MCF 10A (cell line): ENCODE measurements at regions of chr5 and their contacts with region 1.

Region 1: GRCh38 chr5:57082441-57083067 is 91.3 kb upstream of the GPBP1 start:
- DNase-seq: peak; percentile 42
- H3K4me3 Mint-ChIP-seq: no peak overlapping the region
- H3K27ac Mint-ChIP-seq: no peak overlapping the region
- H3K4me1 Mint-ChIP-seq: no peaks in the 10 kb centered on the region
- H3K27me3 Mint-ChIP-seq: no peaks in the 10 kb centered on the region
- CTCF ChIP-seq: peak; percentile 44

Region 2: DNA sequence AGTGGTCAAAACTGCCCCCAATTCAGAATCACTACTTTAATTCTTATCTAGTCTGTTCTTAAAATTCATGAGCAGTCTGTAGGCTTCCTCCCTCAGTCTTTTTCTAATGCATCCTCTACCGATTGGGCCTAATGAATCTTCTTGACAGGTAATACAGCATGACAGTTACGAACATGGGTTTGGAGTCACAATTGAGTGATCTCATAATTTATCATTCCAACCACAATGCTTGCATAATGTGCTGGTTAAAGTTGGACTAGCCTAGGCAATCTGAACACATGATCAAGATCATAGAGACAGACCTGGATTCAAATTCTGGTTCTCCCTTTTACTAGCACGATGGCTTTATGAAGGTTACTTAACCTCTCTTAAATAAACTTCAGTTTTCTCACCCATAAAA is 206.2 kb before region 1 on chr5:
- CTCF ChIA-PET with region 1: no interaction called
- POLR2A ChIA-PET with region 1: no interaction called
- intact Hi-C with region 1: no loop called
- DNase-seq: peak; percentile 45
- H3K4me3 Mint-ChIP-seq: no peak overlapping the region
- H3K27ac Mint-ChIP-seq: no peak overlapping the region
- H3K4me1 Mint-ChIP-seq: peaks cover 6% of the 10 kb centered on the region
- H3K27me3 Mint-ChIP-seq: no peaks in the 10 kb centered on the region
- CTCF ChIP-seq: no peak

Region 3: GRCh38 chr5:56900858-56901578 is 181.5 kb before region 1 on chr5:
- CTCF ChIA-PET with region 1: interaction called, 6 read pairs
- POLR2A ChIA-PET with region 1: no interaction called
- intact Hi-C with region 1: loop called (anchors 1 kb)
- DNase-seq: peak; percentile 63
- H3K4me3 Mint-ChIP-seq: no peak overlapping the region
- H3K27ac Mint-ChIP-seq: no peak overlapping the region
- H3K4me1 Mint-ChIP-seq: no peaks in the 10 kb centered on the region
- H3K27me3 Mint-ChIP-seq: no peaks in the 10 kb centered on the region
- CTCF ChIP-seq: peak; percentile 78

Region 4: DNA sequence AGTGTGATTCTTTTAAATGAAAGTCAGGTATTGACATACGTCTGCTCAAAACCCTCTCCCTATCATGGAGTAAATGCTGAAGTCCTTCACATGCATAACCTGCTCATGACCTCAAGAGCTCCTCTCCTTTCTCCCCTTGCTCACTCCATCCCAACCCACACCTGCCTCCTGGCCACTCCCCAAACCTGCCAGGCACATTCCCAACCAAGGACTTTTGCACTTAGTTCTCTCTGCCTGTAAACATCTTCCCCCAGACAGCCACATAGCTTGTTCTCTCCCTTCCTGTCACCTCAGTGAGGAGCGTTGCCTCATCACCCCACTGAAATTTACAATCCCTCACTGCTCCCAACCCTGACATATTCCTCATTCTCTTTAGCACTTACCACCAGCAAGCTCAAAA is 164.5 kb before region 1 on chr5:
- CTCF ChIA-PET with region 1: interaction called, 15 read pairs
- POLR2A ChIA-PET with region 1: no interaction called
- intact Hi-C with region 1: no loop called
- DNase-seq: no peak
- H3K4me3 Mint-ChIP-seq: no peak overlapping the region
- H3K27ac Mint-ChIP-seq: no peak overlapping the region
- H3K4me1 Mint-ChIP-seq: no peaks in the 10 kb centered on the region
- H3K27me3 Mint-ChIP-seq: no peaks in the 10 kb centered on the region
- CTCF ChIP-seq: no peak

Region 5: DNA sequence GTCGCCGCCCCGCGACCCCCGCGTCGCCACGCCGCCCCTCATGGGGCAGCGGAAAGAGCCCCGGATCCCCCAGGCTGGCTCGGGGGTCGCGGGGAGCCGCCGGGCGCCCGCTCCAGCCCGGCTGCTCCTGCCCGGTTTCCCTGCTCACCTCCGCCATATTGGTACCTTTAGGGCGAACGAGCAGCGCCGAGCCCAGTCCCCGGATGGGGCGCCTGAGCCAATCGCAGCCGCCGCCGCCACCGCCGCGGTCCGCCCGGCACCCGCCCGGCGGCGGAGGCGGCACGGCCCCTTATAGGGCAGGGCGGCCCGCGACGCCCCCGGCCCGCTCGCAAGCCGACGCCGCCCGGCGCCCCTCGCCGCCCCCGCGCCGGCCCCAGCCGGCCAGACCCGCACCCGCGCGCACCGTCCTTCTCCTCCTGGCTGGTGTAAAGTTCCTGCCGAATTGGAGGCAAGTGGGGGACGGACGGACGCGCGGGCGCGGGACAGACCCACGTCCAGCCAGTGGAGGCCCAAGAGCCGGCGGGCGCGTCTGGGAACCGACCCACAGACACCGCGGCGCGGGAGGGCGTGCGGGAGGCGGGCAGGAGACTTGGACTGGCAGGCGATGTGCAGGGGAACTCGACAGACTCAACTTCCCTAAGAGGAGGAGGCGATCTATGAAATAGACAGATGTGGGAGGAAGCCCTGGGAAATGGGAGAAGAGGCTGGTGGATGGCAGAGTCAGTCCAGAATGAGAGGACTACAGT is 130.4 kb before region 1 on chr5 and contains the start of gene MIER3:
- CTCF ChIA-PET with region 1: interaction called, 22 read pairs
- POLR2A ChIA-PET with region 1: interaction called, 3 read pairs
- intact Hi-C with region 1: loop called (anchors 1 kb)
- DNase-seq: peak; percentile 73
- H3K4me3 Mint-ChIP-seq: peak within 1 kb of the TSS; percentile 88
- H3K27ac Mint-ChIP-seq: peak within 1 kb of the TSS; percentile 56
- H3K4me1 Mint-ChIP-seq: peaks cover 14% of the 10 kb centered on the region
- H3K27me3 Mint-ChIP-seq: peaks cover 13% of the 10 kb centered on the region
- CTCF ChIP-seq: no peak
- total RNA-seq, gene MIER3: 17.8 and 25.0 TPM in 2 replicates

Region 6: DNA sequence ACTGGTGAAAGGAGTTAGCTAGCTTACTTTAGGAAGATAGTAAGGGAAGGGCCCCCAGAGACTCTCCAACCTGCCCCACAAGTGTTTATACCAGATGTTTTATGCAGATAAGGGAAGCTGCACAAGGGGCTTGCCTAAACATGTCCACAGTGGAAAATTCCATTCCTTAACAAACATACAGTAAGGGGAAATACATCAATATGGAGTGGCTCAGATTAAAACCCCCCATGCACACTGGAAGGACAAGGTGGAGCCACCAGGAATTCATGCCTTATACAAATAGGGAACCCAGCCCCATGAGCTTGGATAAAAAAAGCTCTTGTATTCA is 15.0 kb before region 1 on chr5:
- CTCF ChIA-PET with region 1: interaction called, 12 read pairs
- POLR2A ChIA-PET with region 1: no interaction called
- intact Hi-C with region 1: no loop called
- DNase-seq: no peak
- H3K4me3 Mint-ChIP-seq: no peak overlapping the region
- H3K27ac Mint-ChIP-seq: peak overlapping the region; percentile 16
- H3K4me1 Mint-ChIP-seq: no peaks in the 10 kb centered on the region
- H3K27me3 Mint-ChIP-seq: peaks cover 8% of the 10 kb centered on the region
- CTCF ChIP-seq: no peak

Region 7: DNA sequence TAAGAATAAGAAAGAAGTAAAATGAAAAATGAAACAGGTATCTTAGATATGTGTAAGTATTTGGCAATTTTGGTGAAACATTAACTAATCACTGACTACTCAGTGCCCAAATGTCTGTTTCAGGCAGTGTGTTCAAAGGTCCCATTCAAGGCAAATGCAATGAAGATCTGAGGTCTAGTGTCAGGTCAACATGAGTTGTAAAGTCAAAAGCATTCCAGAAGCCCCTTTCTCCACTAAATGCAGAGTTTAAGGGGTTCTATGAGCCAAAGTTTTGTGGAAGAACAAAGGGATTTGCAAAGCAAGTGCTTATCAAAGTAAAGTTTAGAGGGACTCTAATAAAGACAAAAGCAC is 20.3 kb after region 1 on chr5:
- CTCF ChIA-PET with region 1: no interaction called
- POLR2A ChIA-PET with region 1: no interaction called
- intact Hi-C with region 1: no loop called
- DNase-seq: no peak
- H3K4me3 Mint-ChIP-seq: no peak overlapping the region
- H3K27ac Mint-ChIP-seq: no peak overlapping the region
- H3K4me1 Mint-ChIP-seq: no peaks in the 10 kb centered on the region
- H3K27me3 Mint-ChIP-seq: no peaks in the 10 kb centered on the region
- CTCF ChIP-seq: no peak

Region 8: GRCh38 chr5:57166276-57166675 is 83.7 kb after region 1 on chr5:
- CTCF ChIA-PET with region 1: no interaction called
- POLR2A ChIA-PET with region 1: no interaction called
- intact Hi-C with region 1: no loop called
- DNase-seq: no peak
- H3K4me3 Mint-ChIP-seq: no peak overlapping the region
- H3K27ac Mint-ChIP-seq: no peak overlapping the region
- H3K4me1 Mint-ChIP-seq: no peaks in the 10 kb centered on the region
- H3K27me3 Mint-ChIP-seq: no peaks in the 10 kb centered on the region
- CTCF ChIP-seq: no peak